ENCODE measurements at regions of chr2 and their contacts with region 1.

Region 1: GRCh38 chr2:24084386-24085361 is at the start of gene TP53I3:
- DNase-seq: peak; percentile 93
- ATAC-seq: peak; percentile 85
- H3K4me3 Mint-ChIP-seq: peak within 1 kb of the TSS; percentile 92
- H3K27ac Mint-ChIP-seq: peak within 1 kb of the TSS; percentile 92
- H3K4me1 Mint-ChIP-seq: peaks cover 16% of the 10 kb centered on the region
- H3K27me3 Mint-ChIP-seq: no peaks in the 10 kb centered on the region
- CTCF ChIP-seq: peak; percentile 72
- total RNA-seq, gene TP53I3: 4.4 and 6.3 TPM in 2 replicates

Region 2: GRCh38 chr2:23824777-23825212 is 259.9 kb before region 1 on chr2:
- CTCF ChIA-PET with region 1: interaction called, 86 read pairs
- POLR2A ChIA-PET with region 1: interaction called, 9 read pairs
- intact Hi-C with region 1: loop called (anchors 1 kb)
- DNase-seq: no peak
- ATAC-seq: peak; percentile 65
- H3K4me3 Mint-ChIP-seq: no peak overlapping the region
- H3K27ac Mint-ChIP-seq: no peak overlapping the region
- H3K4me1 Mint-ChIP-seq: peaks cover 2% of the 10 kb centered on the region
- H3K27me3 Mint-ChIP-seq: no peaks in the 10 kb centered on the region
- CTCF ChIP-seq: peak; percentile 18

Region 3: GRCh38 chr2:23988371-23988770 is 96.3 kb before region 1 on chr2:
- CTCF ChIA-PET with region 1: no interaction called
- POLR2A ChIA-PET with region 1: no interaction called
- intact Hi-C with region 1: loop called (anchors 1 kb)
- DNase-seq: no peak
- ATAC-seq: no peak
- H3K4me3 Mint-ChIP-seq: no peak overlapping the region
- H3K27ac Mint-ChIP-seq: no peak overlapping the region
- H3K4me1 Mint-ChIP-seq: no peaks in the 10 kb centered on the region
- H3K27me3 Mint-ChIP-seq: no peaks in the 10 kb centered on the region
- CTCF ChIP-seq: no peak

Region 4: DNA sequence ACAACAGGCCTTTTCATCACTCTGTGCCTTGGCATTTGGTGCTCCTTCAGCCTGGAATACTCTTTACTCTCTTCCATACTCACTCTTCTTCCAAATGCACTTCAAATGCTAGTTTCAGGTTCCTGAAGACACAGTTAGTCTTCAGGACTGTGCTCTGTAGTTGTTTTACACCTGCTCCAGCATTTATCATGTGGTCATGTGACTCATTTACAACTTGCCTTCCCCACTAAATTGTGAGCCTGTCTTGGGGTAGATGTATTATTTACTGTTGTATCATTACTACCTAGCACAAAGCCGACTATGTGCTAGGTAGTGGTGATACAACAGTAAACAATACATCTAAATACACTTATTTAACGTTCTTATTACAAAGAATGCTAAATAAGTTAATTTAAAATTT is 28.2 kb after region 1 on chr2:
- CTCF ChIA-PET with region 1: no interaction called
- POLR2A ChIA-PET with region 1: no interaction called
- intact Hi-C with region 1: no loop called
- DNase-seq: no peak
- ATAC-seq: no peak
- H3K4me3 Mint-ChIP-seq: no peak overlapping the region
- H3K27ac Mint-ChIP-seq: no peak overlapping the region
- H3K4me1 Mint-ChIP-seq: no peaks in the 10 kb centered on the region
- H3K27me3 Mint-ChIP-seq: no peaks in the 10 kb centered on the region
- CTCF ChIP-seq: no peak

Region 5: DNA sequence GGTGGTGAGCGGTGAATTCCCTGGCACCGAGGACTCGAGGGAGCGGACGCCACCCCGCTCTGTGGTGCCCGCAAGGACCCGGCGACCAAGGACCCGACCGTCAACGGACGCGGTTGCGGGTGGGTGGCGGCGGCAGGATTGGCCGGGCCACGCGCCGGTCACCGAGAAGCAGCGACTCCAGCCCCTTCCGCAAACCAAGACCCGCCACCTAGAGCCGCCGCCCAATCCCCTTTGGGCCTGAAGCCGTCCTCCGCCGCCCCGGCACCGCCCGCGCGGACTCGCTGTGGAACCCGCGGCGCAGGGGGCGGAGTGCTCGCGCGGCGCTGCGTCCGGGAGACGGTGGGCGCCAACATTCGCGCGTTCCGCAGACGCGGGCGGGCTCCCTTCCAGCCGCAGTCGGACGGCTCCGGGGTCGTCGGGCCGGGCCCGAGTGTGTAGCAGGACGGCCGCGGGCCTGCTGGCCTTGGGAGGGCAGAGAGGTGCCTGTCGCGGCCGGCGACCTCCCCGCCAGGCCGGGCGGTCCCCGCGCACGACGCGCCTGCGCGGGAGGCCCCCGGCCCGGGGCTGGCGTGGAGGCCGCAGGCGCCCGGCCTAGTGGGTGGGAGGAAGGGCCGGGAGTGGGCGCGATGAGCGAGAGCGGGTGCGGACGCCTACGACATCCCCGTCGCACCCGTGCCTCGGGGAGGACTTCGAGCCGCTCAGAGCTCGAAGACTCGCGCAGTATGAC is 38.7 kb after region 1 on chr2 and contains the starts of genes FAM228B and PFN4:
- CTCF ChIA-PET with region 1: interaction called, 6 read pairs
- POLR2A ChIA-PET with region 1: interaction called, 7 read pairs
- intact Hi-C with region 1: loop called (anchors 1 kb)
- DNase-seq: peak; percentile 82
- ATAC-seq: peak; percentile 93
- H3K4me3 Mint-ChIP-seq: peak within 1 kb of the TSS; percentile 85
- H3K27ac Mint-ChIP-seq: peak within 1 kb of the TSS; percentile 92
- H3K4me1 Mint-ChIP-seq: peaks cover 15% of the 10 kb centered on the region
- H3K27me3 Mint-ChIP-seq: no peaks in the 10 kb centered on the region
- CTCF ChIP-seq: no peak
- total RNA-seq, gene FAM228B: 24.7 and 26.2 TPM in 2 replicates
- total RNA-seq, gene PFN4: 0.34 and 0.60 TPM in 2 replicates

Measured in activated B cell treated with CpG ODN at 0.5 μM for 24 hours (primary cell).